PC-3 (cell line): ENCODE measurements at regions of chr5 and their contacts with region 1.

Region 1: DNA sequence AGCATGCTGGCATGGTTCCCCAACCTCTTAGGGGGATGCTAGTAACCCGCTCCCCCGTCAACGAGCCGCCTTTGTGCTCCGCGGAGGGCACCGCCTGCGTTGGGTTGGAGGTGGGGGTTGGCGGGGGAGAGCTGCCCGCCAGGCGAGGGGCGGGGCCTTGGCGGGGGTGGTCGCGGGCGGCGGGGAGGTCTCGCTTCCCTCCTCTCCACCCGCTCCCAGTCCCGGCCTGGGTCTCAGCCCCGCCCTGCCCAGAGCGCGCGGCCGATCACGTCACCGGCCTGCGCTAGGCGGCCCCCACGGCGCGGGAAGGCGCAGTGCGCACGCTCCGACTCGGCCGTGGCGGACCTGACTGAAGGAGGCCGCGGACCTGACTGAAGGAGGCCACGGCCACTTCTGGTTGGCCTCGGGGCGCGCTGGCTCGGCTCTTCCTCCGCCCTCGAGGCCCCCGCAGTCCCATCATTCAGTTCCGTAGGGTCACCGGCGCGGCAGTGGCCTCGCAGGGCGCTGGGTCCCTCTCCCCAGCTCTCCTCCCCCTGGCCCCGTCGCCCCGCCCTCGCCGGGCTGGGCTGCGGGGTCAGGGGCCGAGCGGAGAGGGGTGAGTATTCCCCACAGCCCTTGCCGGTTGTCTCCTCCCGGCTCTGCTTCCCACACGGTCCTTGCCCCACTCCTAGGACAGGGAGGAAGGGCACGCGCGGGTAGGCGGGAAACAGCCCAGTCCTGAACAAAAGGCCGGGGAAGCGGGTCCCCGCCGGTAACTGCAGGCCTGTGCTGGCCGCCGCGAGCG is at the start of gene ATG10:
- DNase-seq: peak; percentile 88
- ATAC-seq: peak; percentile 96
- H3K4me3 ChIP-seq: peak within 1 kb of the TSS; percentile 78
- H3K27ac ChIP-seq: peak within 1 kb of the TSS; percentile 89
- H3K4me1 ChIP-seq: peaks cover 12% of the 10 kb centered on the region; the same call in 1 of the 2 replicates
- H3K27me3 ChIP-seq: no peaks in the 10 kb centered on the region
- CTCF ChIP-seq: no peak
- total RNA-seq, gene ATG10: 11.7 and 11.8 TPM in 2 replicates

Region 2: GRCh38 chr5:81601919-81602318 is 370.0 kb before region 1 on chr5:
- CTCF ChIA-PET with region 1: no interaction called
- POLR2A ChIA-PET with region 1: no interaction called
- intact Hi-C with region 1: no loop called
- DNase-seq: peak; percentile 40
- ATAC-seq: peak; percentile 98
- H3K4me3 ChIP-seq: no peak overlapping the region
- H3K27ac ChIP-seq: no peak overlapping the region
- H3K4me1 ChIP-seq: 0 out of 2 replicates have a peak, but pooled peaks cover 3% of the 10 kb centered on the region
- H3K27me3 ChIP-seq: no peaks in the 10 kb centered on the region
- CTCF ChIP-seq: no peak

Region 3: DNA sequence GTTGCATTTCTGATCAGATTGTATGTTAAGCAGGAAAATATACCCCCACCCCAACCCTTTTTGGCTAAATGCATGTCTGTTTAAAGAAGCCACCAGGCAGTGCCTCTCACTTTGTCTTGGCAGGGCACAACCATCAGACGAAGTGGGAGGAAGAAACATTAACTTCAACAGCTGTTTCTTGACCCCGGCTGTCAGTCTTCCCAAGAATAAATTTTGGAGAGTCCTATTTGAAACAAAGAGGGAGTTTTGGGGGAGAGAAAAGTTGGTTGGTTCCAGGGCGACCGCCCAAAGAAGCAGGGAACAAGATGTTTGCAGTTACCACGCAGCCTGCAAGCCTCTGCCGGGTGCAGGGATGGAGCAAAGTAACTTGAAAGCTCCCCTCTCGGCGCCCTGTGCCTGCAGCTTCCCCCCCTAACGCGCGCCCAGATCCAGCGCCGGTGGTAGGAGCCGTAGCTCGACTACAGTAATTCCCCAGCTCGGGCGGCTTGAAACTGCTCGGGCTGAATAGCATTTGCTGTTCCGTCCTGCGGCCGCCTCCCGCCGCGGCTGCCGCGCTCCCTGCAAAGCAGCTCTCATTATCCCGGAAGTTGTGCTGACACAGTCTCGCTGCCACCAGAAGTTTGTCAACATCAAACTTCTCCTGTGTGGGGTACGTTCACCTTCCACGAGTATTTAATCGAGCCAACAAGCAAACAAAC is 120.3 kb before region 1 on chr5:
- CTCF ChIA-PET with region 1: no interaction called
- POLR2A ChIA-PET with region 1: interaction called, 4 read pairs
- intact Hi-C with region 1: loop called (anchors 5 kb)
- DNase-seq: peak; percentile 86
- ATAC-seq: peak; percentile 92
- H3K4me3 ChIP-seq: peak overlapping the region; percentile 67
- H3K27ac ChIP-seq: peak overlapping the region; percentile 71
- H3K4me1 ChIP-seq: peaks cover 10% of the 10 kb centered on the region
- H3K27me3 ChIP-seq: no peaks in the 10 kb centered on the region
- CTCF ChIP-seq: no peak

Region 4: DNA sequence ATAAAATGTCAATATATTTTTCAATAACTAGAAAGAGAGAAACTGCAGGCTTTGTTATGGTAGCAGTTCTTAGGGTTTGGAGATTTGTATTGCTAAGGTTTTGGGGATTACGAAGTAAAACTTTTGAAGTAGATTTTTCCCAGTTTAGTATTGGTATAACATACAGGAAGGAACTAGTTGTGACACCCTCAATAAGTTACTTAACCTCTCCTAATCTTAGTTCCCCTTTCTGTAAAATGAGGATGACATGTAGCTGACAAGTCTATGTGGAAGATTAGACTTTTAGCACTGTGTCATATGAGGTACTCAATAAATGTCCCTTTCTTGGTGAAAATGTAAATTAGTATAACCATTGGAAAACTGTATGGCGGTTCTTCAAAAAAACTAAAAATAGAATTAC is 73.5 kb before region 1 on chr5:
- CTCF ChIA-PET with region 1: no interaction called
- POLR2A ChIA-PET with region 1: no interaction called
- intact Hi-C with region 1: no loop called
- DNase-seq: no peak
- ATAC-seq: no peak
- H3K4me3 ChIP-seq: no peak overlapping the region
- H3K27ac ChIP-seq: no peak overlapping the region
- H3K4me1 ChIP-seq: no peaks in the 10 kb centered on the region
- H3K27me3 ChIP-seq: no peaks in the 10 kb centered on the region
- CTCF ChIP-seq: no peak

Region 5: GRCh38 chr5:81922854-81923279 is 49.0 kb before region 1 on chr5:
- CTCF ChIA-PET with region 1: no interaction called
- POLR2A ChIA-PET with region 1: no interaction called
- intact Hi-C with region 1: no loop called
- DNase-seq: no peak
- ATAC-seq: no peak
- H3K4me3 ChIP-seq: no peak overlapping the region
- H3K27ac ChIP-seq: no peak overlapping the region
- H3K4me1 ChIP-seq: no peaks in the 10 kb centered on the region
- H3K27me3 ChIP-seq: peaks cover 13% of the 10 kb centered on the region
- CTCF ChIP-seq: no peak

Region 6: GRCh38 chr5:81948349-81948748 is 23.6 kb before region 1 on chr5:
- CTCF ChIA-PET with region 1: no interaction called
- POLR2A ChIA-PET with region 1: no interaction called
- intact Hi-C with region 1: no loop called
- DNase-seq: no peak
- ATAC-seq: no peak
- H3K4me3 ChIP-seq: no peak overlapping the region
- H3K27ac ChIP-seq: no peak overlapping the region
- H3K4me1 ChIP-seq: no peaks in the 10 kb centered on the region
- H3K27me3 ChIP-seq: no peaks in the 10 kb centered on the region
- CTCF ChIP-seq: no peak